ENCODE measurements at regions of chr6 and their contacts with region 1.

Region 1: DNA sequence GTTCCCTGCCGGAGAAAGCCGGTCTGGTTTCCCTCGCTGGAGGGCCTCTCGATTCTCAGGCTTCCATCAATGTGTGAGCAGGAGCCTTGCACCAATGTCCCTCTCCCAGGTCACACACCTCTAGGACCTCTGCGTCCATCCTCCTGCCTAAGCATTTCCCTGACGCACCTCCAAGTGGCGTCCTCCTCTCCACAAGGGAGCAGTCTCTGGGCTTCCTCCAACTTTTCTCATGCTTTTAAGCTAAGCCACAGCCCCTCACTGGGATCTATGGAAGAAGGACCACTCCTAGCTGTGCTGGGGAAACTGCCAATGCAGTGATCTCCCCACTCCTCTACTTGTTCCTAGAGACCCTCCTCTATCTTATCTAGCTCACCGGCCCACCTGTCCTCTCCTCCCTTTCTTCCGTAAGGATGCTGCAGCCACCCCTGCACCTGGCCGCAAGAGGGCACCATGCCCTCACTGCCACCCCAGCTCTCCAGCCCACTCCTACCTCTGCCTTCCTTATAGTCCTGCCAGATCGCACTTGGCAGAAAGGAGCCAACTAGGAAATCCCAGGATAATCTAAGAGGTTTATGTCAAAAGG is 258.7 kb downstream of the LRFN2 start:
- DNase-seq: peak; percentile 87
- H3K4me3 Mint-ChIP-seq: no peak overlapping the region
- H3K27ac Mint-ChIP-seq: no peak overlapping the region
- H3K4me1 Mint-ChIP-seq: peaks cover 34% of the 10 kb centered on the region
- H3K27me3 Mint-ChIP-seq: peaks cover 19% of the 10 kb centered on the region

Region 2: GRCh38 chr6:39724787-39725631 is 603.5 kb before region 1 on chr6 and contains the start of gene KIF6:
- intact Hi-C with region 1: no loop called
- DNase-seq: peak; percentile 92
- H3K4me3 Mint-ChIP-seq: peak within 1 kb of the TSS; percentile 92
- H3K27ac Mint-ChIP-seq: peak within 1 kb of the TSS; percentile 78
- H3K4me1 Mint-ChIP-seq: peaks cover 6% of the 10 kb centered on the region
- H3K27me3 Mint-ChIP-seq: peaks cover 7% of the 10 kb centered on the region
- total RNA-seq, gene KIF6: 0.17 and 0.33 TPM in 2 replicates

Region 3: GRCh38 chr6:40436685-40437604 is 108.4 kb after region 1 on chr6:
- intact Hi-C with region 1: loop called (anchors 2 kb)
- DNase-seq: peak; percentile 85
- H3K4me3 Mint-ChIP-seq: peak overlapping the region; percentile 26
- H3K27ac Mint-ChIP-seq: peak overlapping the region; percentile 63
- H3K4me1 Mint-ChIP-seq: peaks cover 27% of the 10 kb centered on the region
- H3K27me3 Mint-ChIP-seq: no peaks in the 10 kb centered on the region

Region 4: GRCh38 chr6:40587240-40588069 is 259.0 kb after region 1 on chr6 and contains the start of gene LRFN2:
- intact Hi-C with region 1: loop called (anchors 1 kb)
- DNase-seq: peak; percentile 94
- H3K4me3 Mint-ChIP-seq: peak within 1 kb of the TSS; percentile 91
- H3K27ac Mint-ChIP-seq: no peak within 1 kb of the TSS
- H3K4me1 Mint-ChIP-seq: peaks cover 22% of the 10 kb centered on the region
- H3K27me3 Mint-ChIP-seq: peaks cover 49% of the 10 kb centered on the region
- total RNA-seq, gene LRFN2: 0.35 and 0.45 TPM in 2 replicates

Region 5: DNA sequence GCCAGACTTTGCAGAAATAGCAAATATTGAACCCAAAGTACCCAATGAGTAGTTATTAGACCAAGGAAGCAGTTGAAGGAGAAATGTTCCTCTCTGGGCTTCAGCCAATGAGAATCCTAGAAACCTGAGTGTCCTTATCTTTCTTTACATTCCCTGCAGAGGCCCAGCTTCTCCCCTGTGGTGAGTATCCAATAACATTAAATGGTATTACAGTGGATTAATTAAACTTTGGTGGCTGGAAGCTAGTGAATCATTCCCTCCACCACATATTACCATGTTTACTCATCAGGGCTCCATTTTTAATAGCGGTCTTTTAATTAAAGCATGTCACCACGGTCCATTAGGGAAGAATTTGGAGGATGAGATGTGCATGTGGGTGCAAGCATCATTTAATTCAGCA is 636.5 kb after region 1 on chr6:
- intact Hi-C with region 1: no loop called
- DNase-seq: no peak
- H3K4me3 Mint-ChIP-seq: no peak overlapping the region
- H3K27ac Mint-ChIP-seq: no peak overlapping the region
- H3K4me1 Mint-ChIP-seq: peaks cover 17% of the 10 kb centered on the region
- H3K27me3 Mint-ChIP-seq: peaks cover 9% of the 10 kb centered on the region

Measured in activated CD4-positive, alpha-beta T cell treated with anti-CD3 and anti-CD28 coated beads, Interleukin-2, amount 10 ng/mL, durations not matched to agents 24 days and 14 days (primary cell).